Right ventricle myocardium inferior (tissue), 1 donor: ENCODE measurements at regions of chr19 and their contacts with region 1.

Region 1: DNA sequence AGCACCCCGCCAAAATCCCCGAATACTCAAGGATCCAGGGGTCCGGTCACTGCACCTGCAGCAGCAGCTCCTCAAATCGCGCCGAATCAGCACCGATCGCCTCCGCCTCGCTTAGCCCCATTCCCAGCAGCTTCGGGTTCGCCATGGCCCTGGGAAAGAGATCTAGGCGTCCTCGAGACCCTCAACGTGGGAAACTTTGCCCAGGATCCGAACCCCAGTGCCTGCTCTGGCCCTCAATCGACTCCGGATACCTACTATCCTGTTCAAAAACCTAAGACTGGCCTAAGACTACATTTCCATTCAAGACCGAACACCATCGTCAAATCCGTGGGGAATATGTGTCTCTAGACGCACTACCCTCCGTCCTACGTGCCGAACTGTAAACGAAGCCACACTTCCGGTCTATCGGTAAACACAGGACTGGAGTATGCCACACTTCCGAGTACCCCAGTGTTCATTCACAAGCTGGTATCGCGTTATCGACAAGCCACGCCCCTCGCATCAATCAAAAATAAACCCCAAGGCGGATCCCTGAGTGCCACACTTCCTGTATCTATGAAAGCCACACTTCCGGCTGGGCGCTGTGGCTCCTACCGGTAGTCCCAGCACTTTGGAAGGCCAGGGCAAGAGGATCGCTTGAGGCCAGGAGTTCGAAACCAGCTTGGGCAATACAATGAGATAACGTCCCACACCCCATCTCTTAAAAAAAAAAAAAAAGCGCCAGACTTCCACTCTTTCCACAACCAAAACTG is at the start of gene PIH1D1:
- DNase-seq: peak; percentile 98
- ATAC-seq: peak; percentile 83
- total RNA-seq, gene PIH1D1: 32.4 TPM

Region 2: GRCh38 chr19:49430678-49431329 is 20.8 kb before region 1 on chr19:
- intact Hi-C with region 1: no loop called
- DNase-seq: no peak
- ATAC-seq: no peak

Region 3: DNA sequence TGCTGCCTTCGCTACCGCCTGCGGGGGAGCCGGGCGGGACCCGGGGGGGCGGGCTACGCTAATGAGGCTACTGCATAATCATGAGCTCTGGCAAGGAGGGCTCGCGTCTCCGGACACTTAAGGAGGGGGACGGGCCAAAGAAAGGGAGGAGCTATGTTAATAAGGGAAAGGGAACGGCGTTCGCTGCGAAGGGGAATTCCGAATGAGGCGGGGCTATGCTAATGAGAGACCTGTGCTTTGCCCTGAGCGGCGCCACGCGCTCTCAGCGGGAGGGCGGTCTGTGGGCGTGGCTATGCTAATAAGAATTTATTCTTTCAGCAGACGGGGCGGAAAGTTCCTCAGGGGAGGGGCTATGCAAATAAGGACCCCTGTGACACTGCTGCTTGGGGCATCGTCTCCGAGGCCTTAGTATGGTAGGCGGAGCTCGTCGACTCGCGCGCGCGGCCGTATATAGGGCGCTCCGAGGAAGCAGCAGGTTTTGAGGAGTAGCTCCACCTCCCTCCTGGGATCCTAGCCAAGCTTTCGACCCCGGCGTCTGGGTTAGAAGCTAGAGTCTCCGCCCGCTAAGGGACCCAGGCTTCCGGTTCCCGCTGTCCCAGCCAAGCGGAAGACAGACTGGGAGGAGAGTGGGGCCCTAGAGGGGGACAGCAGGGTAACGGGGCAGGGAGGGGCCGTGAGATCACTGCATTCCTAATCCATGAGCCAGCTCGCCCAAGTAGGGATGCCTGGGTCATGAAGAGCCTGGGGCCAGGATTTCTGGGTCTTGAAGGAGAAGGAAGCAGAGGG is 188.7 kb after region 1 on chr19 and contains the start of gene RRAS:
- intact Hi-C with region 1: loop called (anchors 5 kb)
- DNase-seq: peak; percentile 100
- ATAC-seq: peak; percentile 79
- total RNA-seq, gene RRAS: 120 TPM

Region 4: GRCh38 chr19:50496189-50497021 is 1044.8 kb after region 1 on chr19:
- intact Hi-C with region 1: loop called (anchors 10 kb)
- DNase-seq: peak; percentile 79
- ATAC-seq: peak; percentile 59